ENCODE measurements at regions of chrX and their contacts with region 1.

Region 1: GRCh38 chrX:151974336-151975227 is at the start of gene GABRE:
- DNase-seq: no peak
- ATAC-seq: peak; percentile 71
- H3K4me3 ChIP-seq: peak within 1 kb of the TSS; percentile 68 to 78 (median 77)
- H3K27ac ChIP-seq: peak within 1 kb of the TSS; percentile 59
- H3K4me1 ChIP-seq: peaks cover 40% of the 10 kb centered on the region
- H3K27me3 ChIP-seq: no peaks in the 10 kb centered on the region; a peak in 1 of 5 replicates
- CTCF ChIP-seq: no peak
- EP300 ChIP-seq: no peak
- POLR2A ChIP-seq: peak; percentile 93 to 94
- RAD21 ChIP-seq: no peak
- total RNA-seq, gene GABRE: 2.6 and 12.2 TPM in 2 replicates

Region 2: DNA sequence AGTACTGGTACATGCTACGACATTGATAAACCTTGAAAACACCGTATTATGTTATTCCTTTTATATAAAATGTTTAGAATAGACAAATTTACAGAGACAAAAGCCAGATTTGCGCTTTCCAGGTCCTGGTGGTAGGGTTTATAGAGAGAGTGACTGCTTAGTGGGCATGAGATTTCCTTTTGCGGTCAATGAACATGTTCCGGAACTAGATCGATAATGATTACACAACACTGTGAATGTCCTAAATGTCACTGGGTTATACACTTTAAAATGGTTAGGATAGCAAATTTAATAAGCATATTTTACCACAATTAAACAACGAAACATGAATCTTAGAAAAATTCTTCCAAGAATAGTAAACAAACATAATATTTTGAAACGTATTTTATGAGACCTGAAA is 86.5 kb after region 1 on chrX:
- CTCF ChIA-PET with region 1: no interaction called
- POLR2A ChIA-PET with region 1: no interaction called
- in situ Hi-C with region 1: no loop called
- intact Hi-C with region 1: loop called (anchors 10 kb)
- DNase-seq: no peak
- ATAC-seq: no peak
- H3K4me3 ChIP-seq: no peak overlapping the region
- H3K27ac ChIP-seq: no peak overlapping the region
- H3K4me1 ChIP-seq: no peaks in the 10 kb centered on the region
- H3K27me3 ChIP-seq: no peaks in the 10 kb centered on the region
- CTCF ChIP-seq: no peak
- EP300 ChIP-seq: no peak
- POLR2A ChIP-seq: no peak
- RAD21 ChIP-seq: no peak

Region 3: GRCh38 chrX:152600691-152601633 is 626.4 kb after region 1 on chrX:
- CTCF ChIA-PET with region 1: no interaction called
- POLR2A ChIA-PET with region 1: no interaction called
- in situ Hi-C with region 1: no loop called
- intact Hi-C with region 1: no loop called
- DNase-seq: no peak
- ATAC-seq: no peak
- H3K4me3 ChIP-seq: no peak overlapping the region
- H3K27ac ChIP-seq: no peak overlapping the region
- H3K4me1 ChIP-seq: no peaks in the 10 kb centered on the region
- H3K27me3 ChIP-seq: no peaks in the 10 kb centered on the region
- CTCF ChIP-seq: no peak
- EP300 ChIP-seq: no peak
- POLR2A ChIP-seq: no peak
- RAD21 ChIP-seq: no peak